ENCODE measurements at regions of chr12 and their contacts with region 1.

Region 1: DNA sequence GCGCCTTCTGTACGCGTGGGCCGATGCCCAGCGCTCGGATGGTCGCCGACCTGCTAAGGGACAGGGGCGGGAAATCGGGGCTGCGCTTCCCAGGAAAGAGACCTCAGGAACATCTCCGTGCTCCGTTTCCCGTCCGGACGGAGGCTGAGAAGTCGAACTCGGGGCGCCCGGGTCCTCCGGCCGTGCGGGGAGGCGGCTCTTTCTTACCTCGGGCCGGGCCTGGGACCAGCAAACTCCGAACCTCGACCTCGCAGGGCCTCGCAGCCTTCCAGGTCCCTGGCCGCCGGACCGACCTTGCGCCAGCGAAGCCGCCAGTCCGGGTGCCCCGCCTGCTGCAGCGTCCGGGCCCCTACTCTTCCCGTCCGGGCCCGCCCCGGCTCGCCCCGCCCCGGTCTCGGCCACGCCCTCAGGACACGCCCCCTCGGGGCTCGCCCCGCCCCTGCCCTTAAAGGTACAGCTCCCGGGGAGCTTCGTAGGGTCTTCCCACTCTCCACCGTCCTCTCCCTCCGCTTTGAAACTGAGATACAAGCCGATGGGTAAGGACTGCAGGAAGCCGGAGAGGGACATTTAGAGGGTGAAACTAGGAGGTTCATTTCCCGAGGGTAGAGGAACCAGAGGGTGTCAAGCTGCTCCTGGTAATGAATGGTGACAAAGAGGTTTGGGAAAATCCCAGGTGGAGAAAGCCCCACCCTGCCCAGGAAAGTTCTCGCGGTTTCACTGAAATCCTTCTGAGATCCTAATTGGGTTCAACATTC is at the start of gene SLC8B1:
- DNase-seq: peak; percentile 73 to 97 (median 92)

Region 2: DNA sequence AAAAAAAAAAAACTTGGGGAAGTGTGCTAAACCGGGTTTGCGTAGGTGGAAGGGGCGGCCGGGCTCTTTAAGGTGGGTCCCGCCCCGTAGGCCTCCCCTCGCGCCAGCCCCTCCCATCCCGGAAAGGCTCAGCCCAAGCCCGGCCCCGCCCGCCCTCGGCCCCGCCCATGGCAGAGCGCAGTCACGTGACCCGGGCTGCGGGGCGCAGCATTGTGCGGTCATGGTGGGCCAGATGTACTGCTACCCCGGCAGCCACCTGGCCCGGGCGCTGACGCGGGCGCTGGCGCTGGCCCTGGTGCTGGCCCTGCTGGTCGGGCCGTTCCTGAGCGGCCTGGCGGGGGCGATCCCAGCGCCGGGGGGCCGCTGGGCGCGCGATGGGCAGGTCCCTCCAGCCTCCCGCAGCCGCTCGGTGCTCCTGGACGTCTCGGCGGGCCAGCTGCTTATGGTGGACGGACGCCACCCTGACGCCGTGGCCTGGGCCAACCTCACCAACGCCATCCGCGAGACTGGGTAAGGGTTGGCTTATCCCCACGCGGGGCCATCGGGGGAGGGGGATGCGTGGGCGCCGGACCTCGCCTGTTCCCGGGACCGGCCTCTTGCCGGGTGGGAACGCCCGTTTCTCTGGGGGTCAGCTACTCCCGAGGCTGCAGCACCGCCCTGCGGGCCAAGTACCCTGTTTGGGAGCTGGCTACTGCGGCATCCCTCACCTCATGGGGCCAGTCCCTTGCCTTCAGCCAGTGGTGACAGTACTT is 23.6 kb after region 1 on chr12 and contains the start of gene PLBD2:
- intact Hi-C with region 1: loop called (anchors 2 kb)
- DNase-seq: peak; percentile 84 to 98 (median 96)

Region 3: DNA sequence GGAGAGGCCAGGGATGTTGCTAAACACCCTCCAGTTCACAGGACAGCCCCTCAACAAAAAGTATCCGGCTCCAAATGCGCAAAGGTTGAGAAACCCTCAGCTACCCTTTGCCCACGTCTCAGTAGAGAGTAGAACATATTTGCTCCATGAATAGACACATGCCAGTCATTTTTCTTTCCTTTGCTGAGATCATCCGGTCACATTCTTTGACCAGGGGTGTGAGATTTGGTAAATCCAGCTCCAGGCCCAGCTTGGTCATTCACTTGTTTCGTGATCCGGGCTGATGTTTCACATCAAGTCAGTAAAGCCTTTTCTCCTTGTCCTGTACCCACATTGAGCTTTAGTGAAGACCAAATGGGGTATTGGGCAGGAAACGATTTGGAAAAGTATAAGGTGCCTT is 220.3 kb after region 1 on chr12:
- intact Hi-C with region 1: no loop called
- DNase-seq: no peak